ENCODE measurements at regions of chr6 and their contacts with region 1.

Region 1: GRCh38 chr6:31862344-31863227 is at the start of gene NEU1:
- H3K4me3 ChIP-seq: peak within 1 kb of the TSS; percentile 82
- H3K27ac ChIP-seq: peak within 1 kb of the TSS; percentile 27
- H3K4me1 ChIP-seq: no peaks in the 10 kb centered on the region
- CTCF ChIP-seq: no peak

Region 2: DNA sequence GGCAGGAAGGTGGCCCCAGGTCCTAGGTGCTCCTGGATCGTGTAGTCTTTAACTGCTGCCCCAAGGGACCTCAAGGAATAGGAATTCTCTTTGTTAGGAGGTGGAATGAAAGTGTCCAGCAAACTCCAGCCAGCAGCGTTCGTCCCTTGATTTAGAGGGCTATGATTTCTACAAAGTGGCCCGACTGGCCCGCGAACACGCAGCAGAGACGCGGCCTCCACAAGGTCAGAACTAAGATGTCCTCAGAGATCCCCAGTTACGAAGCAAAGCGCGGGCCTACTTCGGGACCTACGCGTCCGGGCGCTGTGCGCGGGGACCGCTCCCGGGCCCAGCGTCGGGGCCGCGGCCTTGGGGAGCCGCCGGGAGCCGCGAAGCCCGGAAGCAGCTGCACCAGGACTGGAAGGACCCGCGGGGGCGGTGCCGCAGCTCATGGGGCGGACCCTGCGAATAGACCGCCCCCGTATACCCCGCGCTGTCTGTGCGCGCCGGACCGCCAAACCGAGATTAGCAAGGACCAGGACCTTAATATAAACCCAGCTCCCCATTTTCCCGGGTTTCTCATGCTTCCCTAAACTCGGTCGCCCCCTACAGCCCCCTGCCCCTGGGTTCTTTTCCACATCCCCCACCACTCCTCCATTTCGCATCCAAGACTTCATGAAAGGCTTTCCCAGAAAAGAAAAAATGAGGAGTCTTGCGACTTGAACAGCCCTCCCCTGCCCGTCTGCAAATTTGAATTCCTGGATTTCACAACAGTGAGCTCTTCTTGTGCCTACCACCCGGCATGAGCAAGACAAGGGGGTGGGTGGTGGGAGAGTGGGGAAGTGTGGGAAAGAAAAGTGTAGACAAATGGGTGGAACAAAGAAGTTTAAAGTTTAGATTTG is 202.0 kb before region 1 on chr6 and contains the start of gene C6orf47:
- CTCF ChIA-PET with region 1: interaction called, 7 read pairs
- POLR2A ChIA-PET with region 1: interaction called, 18 read pairs
- H3K4me3 ChIP-seq: peak within 1 kb of the TSS; percentile 67
- H3K27ac ChIP-seq: peak within 1 kb of the TSS; percentile 73
- H3K4me1 ChIP-seq: peaks cover 6% of the 10 kb centered on the region; the same call in 1 of the 2 replicates
- CTCF ChIP-seq: no peak

Region 3: DNA sequence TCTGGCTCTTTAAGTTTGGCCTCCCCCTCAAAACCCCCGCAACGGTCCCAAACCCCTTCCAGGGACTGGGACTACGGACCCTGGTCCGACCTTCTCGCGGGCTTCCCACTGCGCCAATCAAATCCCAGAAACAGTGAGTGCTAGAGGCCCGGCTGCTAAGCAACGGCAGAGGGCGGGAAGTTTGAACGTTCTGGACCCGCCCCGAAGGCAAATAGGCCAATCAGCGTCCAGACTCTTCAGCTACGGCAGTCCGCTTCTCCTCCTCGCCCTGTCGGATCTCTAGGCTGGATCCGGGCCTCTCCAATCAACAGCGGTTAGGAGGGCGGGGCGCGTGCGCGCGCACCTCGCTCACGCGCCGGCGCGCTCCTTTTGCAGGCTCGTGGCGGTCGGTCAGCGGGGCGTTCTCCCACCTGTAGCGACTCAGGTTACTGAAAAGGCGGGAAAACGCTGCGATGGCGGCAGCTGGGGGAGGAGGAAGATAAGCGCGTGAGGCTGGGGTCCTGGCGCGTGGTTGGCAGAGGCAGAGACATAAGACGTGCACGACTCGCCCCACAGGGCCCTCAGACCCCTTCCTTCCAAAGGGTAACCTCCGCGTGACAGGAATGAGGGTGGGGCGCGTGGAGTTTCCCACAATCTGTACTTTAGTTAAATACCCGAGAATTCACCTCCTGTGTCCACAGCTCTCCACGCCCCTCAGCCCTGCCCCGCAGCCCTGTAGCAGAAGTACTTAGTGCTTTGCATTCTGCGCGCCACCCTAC is 122.8 kb before region 1 on chr6 and contains the start of gene MSH5:
- CTCF ChIA-PET with region 1: interaction called, 3 read pairs
- POLR2A ChIA-PET with region 1: interaction called, 10 read pairs
- H3K4me3 ChIP-seq: peak within 1 kb of the TSS; percentile 61
- H3K27ac ChIP-seq: peak within 1 kb of the TSS; percentile 87
- H3K4me1 ChIP-seq: peaks cover 29% of the 10 kb centered on the region
- CTCF ChIP-seq: no peak

Region 4: GRCh38 chr6:31806465-31807272 is 55.9 kb before region 1 on chr6 and contains the start of gene LSM2:
- CTCF ChIA-PET with region 1: no interaction called
- POLR2A ChIA-PET with region 1: interaction called, 24 read pairs
- H3K4me3 ChIP-seq: peak within 1 kb of the TSS; percentile 91
- H3K27ac ChIP-seq: peak within 1 kb of the TSS; percentile 65
- H3K4me1 ChIP-seq: no peaks in the 10 kb centered on the region
- CTCF ChIP-seq: peak; percentile 96

Region 5: GRCh38 chr6:31834434-31835198 is 28.0 kb before region 1 on chr6:
- CTCF ChIA-PET with region 1: interaction called, 4 read pairs
- POLR2A ChIA-PET with region 1: interaction called, 125 read pairs
- H3K4me3 ChIP-seq: peak overlapping the region; percentile 79
- H3K27ac ChIP-seq: peak overlapping the region; percentile 88
- H3K4me1 ChIP-seq: peaks cover 9% of the 10 kb centered on the region
- CTCF ChIP-seq: 0 out of 2 replicates have a peak, but pooled peaks have one; percentile 41

Region 6: GRCh38 chr6:31888276-31889258 is 26.0 kb after region 1 on chr6:
- CTCF ChIA-PET with region 1: interaction called, 53 read pairs
- POLR2A ChIA-PET with region 1: interaction called, 13 read pairs
- H3K4me3 ChIP-seq: no peak overlapping the region
- H3K27ac ChIP-seq: no peak overlapping the region
- H3K4me1 ChIP-seq: no peaks in the 10 kb centered on the region
- CTCF ChIP-seq: peak; percentile 63; the same call in 1 of the 2 replicates

Region 7: GRCh38 chr6:31971993-31972708 is 109.6 kb after region 1 on chr6 and contains the start of gene DXO:
- CTCF ChIA-PET with region 1: no interaction called
- POLR2A ChIA-PET with region 1: interaction called, 12 read pairs
- H3K4me3 ChIP-seq: peak within 1 kb of the TSS; percentile 83
- H3K27ac ChIP-seq: peak within 1 kb of the TSS; percentile 74
- H3K4me1 ChIP-seq: peaks cover 5% of the 10 kb centered on the region
- CTCF ChIP-seq: no peak

Region 8: DNA sequence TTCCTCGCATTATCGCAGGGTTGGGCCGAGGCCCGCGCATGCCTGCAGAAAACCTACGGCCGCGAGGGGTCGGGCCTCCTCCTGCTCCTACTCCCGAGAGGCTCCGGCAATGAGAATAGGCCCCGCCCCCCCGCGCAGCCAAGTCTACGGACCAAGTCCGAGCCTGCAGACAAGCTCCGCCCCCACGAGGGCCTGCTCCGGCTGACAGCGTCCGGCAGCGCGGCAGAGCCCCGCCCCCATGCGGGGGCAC is 333.0 kb after region 1 on chr6:
- CTCF ChIA-PET with region 1: no interaction called
- POLR2A ChIA-PET with region 1: no interaction called
- H3K4me3 ChIP-seq: peak overlapping the region; percentile 72
- H3K27ac ChIP-seq: peak overlapping the region; percentile 97
- H3K4me1 ChIP-seq: peaks cover 4% of the 10 kb centered on the region
- CTCF ChIP-seq: peak; percentile 85

Measured in HEK293 (cell line).